Colonic mucosa (tissue), 4 donors: ENCODE measurements at regions of chr2 and their contacts with region 1.

Region 1: DNA sequence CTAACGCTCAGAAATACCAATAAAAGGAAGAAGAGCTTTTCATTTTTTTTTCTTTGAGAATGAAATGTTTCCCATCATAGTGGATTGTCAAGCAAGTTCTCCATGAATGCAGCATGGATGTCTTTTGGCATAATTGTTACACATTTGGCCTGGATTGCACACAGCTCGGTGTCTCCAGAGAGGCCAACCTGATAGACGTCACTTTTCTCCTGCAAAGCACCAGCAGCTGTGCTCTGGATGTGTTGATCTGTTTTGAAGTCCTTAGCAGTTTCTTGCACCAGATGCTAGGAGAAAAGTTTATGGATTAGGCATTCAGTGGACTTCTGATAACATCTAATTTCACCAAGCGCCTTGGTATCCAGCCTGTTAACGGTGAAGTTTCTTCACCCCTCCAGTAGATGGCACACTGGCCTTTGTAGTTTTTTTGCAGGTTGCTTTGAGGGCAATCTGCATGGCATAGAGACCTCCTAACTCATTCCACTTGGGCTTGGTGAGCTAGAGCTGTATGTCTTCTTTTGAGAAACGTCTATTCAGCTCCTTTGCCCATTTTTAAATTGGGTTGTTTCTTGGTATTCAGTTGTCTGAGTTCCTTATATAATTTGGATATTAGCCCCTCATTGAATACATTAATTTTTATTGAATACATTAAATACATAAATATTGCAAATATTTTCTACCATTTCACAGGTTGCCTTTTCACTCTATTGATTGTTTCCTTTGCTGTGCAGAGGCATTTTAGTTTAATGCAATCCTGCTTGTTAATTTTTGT is 59.7 kb downstream of the PTH2R start:
- DNase-seq: peak; percentile 39
- H3K4me3 ChIP-seq: no peak overlapping the region
- H3K27ac ChIP-seq: no peak overlapping the region
- H3K4me1 ChIP-seq: no peaks in the 10 kb centered on the region
- H3K27me3 ChIP-seq: no peaks in the 10 kb centered on the region
- CTCF ChIP-seq: peak; percentile 44

Region 2: DNA sequence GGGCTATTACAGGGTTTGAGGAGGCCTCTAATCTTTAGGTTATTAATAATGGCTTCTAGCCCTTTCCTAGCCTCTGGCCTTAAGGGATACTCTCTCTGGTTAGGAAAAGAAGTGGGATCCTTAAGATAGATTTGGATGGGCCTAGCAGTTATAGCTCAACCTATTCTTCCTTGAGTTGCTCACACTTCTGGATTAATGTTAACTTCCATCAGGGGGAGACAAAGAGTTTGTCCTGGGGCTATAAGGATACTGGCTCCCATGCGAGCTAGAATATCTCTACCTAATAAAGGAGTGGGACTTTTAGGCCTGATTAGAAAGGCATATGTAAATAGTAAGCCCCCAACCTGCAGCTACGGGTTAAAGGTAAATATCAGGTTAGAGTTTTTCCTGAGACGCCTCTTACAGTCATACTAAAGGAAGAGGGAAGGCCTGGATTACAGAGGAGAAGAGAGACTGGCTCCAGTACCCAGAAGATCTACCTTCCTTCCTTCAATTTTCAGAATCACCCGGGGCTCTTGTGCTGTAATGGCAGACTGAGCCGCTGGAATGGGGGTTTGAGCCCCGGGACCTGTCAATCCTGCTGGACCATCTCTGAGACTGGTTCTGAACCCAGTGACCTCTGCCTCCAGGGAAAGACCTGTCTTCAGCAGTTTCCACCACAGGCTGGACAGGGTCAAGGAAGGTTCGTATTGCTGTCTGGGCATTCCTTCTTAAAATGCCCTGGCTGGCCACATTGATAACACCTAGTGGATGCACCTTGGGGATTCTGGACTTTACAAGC is 73.8 kb before region 1 on chr2:
- intact Hi-C with region 1: no loop called
- DNase-seq: no peak
- H3K4me3 ChIP-seq: no peak overlapping the region
- H3K27ac ChIP-seq: no peak overlapping the region
- H3K4me1 ChIP-seq: no peaks in the 10 kb centered on the region
- H3K27me3 ChIP-seq: no peaks in the 10 kb centered on the region
- CTCF ChIP-seq: no peak

Region 3: GRCh38 chr2:208783187-208783586 is 316.9 kb after region 1 on chr2:
- intact Hi-C with region 1: loop called (anchors 10 kb)
- DNase-seq: no peak
- H3K4me3 ChIP-seq: no peak overlapping the region
- H3K27ac ChIP-seq: no peak overlapping the region
- H3K4me1 ChIP-seq: no peaks in the 10 kb centered on the region
- H3K27me3 ChIP-seq: no peaks in the 10 kb centered on the region
- CTCF ChIP-seq: peak; percentile 27

Region 4: DNA sequence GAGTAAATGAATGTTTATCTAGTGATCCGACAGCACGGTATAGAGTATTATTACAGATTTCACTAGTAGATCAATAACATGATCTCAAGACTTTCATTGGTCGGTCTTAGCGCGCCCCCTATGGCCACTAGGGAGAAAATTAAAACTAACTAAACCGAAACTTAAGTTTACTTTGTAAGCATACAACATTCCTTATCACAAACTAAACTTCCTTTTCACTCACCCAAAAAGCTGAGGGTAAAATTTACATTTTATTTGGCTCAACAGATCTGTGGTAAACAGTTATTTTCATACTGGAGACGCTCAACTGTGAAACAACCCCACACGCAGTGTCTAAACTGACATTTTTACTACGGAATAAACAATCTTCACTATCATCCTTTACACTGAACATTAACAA is 741.9 kb after region 1 on chr2:
- intact Hi-C with region 1: loop called (anchors 2 kb)
- DNase-seq: peak; percentile 38
- H3K4me3 ChIP-seq: peak overlapping the region; percentile 12
- H3K27ac ChIP-seq: no peak overlapping the region
- H3K4me1 ChIP-seq: no peaks in the 10 kb centered on the region
- H3K27me3 ChIP-seq: no peaks in the 10 kb centered on the region
- CTCF ChIP-seq: peak; percentile 55